ENCODE measurements at regions of chr22 and their contacts with region 1.

Region 1: DNA sequence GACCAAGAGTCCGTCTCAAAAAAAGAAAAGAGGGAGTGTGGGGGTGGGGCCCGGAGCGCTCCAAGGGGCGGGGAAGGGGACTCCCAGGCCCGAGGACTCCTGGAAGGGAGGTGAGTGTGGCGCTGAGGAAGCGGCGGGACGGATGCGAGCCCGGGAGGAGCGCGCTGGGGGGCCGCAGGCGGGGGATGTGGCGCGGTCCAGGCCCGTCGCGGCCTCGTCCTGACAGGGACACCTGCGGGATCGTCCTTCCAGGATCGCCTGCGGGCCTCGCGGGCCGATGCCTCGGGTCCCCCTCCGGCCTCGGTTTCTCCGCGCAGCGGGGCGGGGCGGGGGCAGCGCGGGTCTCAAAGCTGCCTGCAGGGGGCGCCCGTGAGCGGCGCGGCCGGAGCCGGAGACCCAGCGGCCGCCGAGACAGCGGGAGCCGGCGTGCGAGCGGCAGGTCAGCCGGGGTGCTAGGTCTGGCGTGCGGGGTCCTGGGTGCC is 3.8 kb upstream of the ADORA2A start:
- DNase-seq: peak; percentile 49 to 80 (median 63)
- H3K4me3 ChIP-seq: peak overlapping the region; percentile 29
- H3K27ac ChIP-seq: no peak overlapping the region
- H3K4me1 ChIP-seq: peaks cover 1% of the 10 kb centered on the region
- H3K27me3 ChIP-seq: no peaks in the 10 kb centered on the region
- CTCF ChIP-seq: peak; percentile 85 to 88 (median 86)
- EP300 ChIP-seq: no peak
- POLR2A ChIP-seq: no peak

Region 2: GRCh38 chr22:24325105-24325757 is 98.3 kb before region 1 on chr22:
- intact Hi-C with region 1: loop called in 1 of 4 experiments (anchors 10 kb)
- DNase-seq: no peak
- H3K4me3 ChIP-seq: no peak overlapping the region
- H3K27ac ChIP-seq: no peak overlapping the region
- H3K4me1 ChIP-seq: no peaks in the 10 kb centered on the region
- H3K27me3 ChIP-seq: no peaks in the 10 kb centered on the region
- CTCF ChIP-seq: peak; percentile 8 to 38 (median 27)
- EP300 ChIP-seq: no peak
- POLR2A ChIP-seq: no peak

Region 3: GRCh38 chr22:24367841-24368240 is 55.7 kb before region 1 on chr22:
- intact Hi-C with region 1: no loop called
- DNase-seq: no peak
- H3K4me3 ChIP-seq: no peak overlapping the region
- H3K27ac ChIP-seq: no peak overlapping the region
- H3K4me1 ChIP-seq: no peaks in the 10 kb centered on the region
- H3K27me3 ChIP-seq: no peaks in the 10 kb centered on the region
- CTCF ChIP-seq: no peak
- EP300 ChIP-seq: no peak
- POLR2A ChIP-seq: no peak

Region 4: GRCh38 chr22:24494528-24495364 is 71.2 kb after region 1 on chr22 and contains the start of gene UPB1:
- intact Hi-C with region 1: loop called in 2 of 4 experiments (anchors 5 to 10 kb)
- DNase-seq: peak in 1 of 5 donors; percentile 19
- H3K4me3 ChIP-seq: no peak within 1 kb of the TSS
- H3K27ac ChIP-seq: no peak within 1 kb of the TSS
- H3K4me1 ChIP-seq: peaks cover 4% of the 10 kb centered on the region
- H3K27me3 ChIP-seq: no peaks in the 10 kb centered on the region
- CTCF ChIP-seq: no peak
- EP300 ChIP-seq: no peak
- POLR2A ChIP-seq: no peak
- total RNA-seq, gene UPB1: 0.25 to 1.2 (median 0.33) TPM in 5 of 7 donors, not detected in the others